AG04449 (cell line): ENCODE measurements at regions of chr9 and their contacts with region 1.

Region 1: DNA sequence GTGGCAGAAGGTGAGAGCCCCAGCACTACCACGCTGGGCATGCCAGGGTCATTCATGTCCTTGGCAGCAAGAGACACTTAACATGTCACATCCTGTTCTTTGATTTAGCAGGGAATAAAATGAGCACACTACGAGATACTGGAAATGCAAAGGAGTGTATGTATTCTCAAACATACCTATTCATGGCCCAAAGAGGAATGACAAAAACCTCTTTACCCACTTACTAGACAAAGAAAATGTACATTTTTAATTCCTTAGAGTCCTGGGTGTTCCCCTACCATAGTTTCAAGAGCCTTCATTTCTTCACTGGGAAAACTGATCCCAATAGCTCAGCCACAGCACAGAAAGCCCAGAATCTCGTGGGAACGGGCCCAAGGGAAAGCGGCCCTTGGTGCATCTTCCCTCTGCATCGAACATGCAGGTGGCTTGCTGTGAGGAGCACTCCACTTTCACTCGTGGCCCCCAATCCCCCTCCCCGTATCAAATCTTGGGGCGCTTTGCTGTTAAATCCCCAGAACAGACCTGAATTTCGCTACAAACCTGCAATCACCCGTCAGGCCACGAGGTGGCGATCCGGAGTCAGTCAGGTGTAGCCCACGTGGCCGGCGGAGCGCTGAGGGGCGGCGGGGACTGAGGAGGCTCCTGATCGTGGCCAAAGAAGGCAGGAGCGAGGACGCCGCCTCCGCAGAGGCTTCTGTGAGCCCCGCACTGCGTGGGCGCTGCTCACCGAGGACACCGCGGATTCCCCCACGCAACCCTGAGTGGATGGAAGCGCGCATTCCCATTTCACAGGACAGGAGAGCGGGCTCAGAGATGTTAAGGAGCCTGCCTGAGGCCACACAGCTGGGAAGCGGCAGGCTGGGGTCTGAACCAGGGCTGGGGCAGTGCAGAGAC is 91.4 kb downstream of the LMX1B start:
- DNase-seq: no peak
- H3K4me3 ChIP-seq: peak overlapping the region; percentile 37
- CTCF ChIP-seq: peak; percentile 92

Region 2: GRCh38 chr9:126690431-126691350 is 14.4 kb before region 1 on chr9:
- CTCF ChIA-PET with region 1: interaction called, 26 read pairs
- POLR2A ChIA-PET with region 1: no interaction called
- DNase-seq: no peak
- H3K4me3 ChIP-seq: no peak overlapping the region
- CTCF ChIP-seq: peak; percentile 58

Region 3: GRCh38 chr9:126722252-126723078 is 17.3 kb after region 1 on chr9:
- CTCF ChIA-PET with region 1: interaction called, 42 read pairs
- POLR2A ChIA-PET with region 1: no interaction called
- DNase-seq: no peak
- H3K4me3 ChIP-seq: peak overlapping the region; percentile 44
- CTCF ChIP-seq: no peak

Region 4: DNA sequence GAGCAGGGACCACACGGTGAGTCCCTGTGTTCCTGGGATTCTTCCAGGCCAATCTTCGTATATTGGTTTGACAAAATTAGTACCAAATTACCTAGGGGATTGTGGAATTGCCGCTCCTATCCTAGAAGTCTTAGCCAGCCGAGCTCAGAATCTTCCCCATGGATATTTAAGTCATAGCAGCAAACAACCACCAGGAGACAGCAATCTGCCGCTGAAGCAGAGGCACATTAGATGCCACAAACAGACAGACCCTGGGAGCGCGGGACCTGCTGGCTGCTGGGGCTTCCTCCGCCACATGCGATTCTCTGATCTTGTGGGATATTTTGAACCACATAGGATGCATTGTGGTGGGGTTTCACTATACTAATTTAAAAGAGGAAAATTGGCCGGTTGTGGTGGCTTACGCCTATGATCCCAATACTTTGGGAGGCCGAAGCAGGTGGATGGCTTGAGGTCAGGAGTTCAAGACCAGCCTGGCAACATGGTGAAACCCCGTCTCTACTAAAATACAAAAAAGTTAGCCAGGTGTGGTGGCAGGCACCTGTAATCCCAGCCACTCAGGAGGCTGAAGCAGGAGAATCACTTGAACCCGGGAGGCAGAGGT is 68.0 kb after region 1 on chr9:
- CTCF ChIA-PET with region 1: interaction called, 252 read pairs
- POLR2A ChIA-PET with region 1: no interaction called
- DNase-seq: no peak
- H3K4me3 ChIP-seq: no peak overlapping the region
- CTCF ChIP-seq: peak; percentile 47

Region 5: GRCh38 chr9:126791406-126792151 is 86.5 kb after region 1 on chr9:
- CTCF ChIA-PET with region 1: interaction called, 46 read pairs
- POLR2A ChIA-PET with region 1: no interaction called
- DNase-seq: peak; percentile 57
- H3K4me3 ChIP-seq: no peak overlapping the region
- CTCF ChIP-seq: no peak